ENCODE measurements at regions of chr11 and their contacts with region 1.

Region 1: DNA sequence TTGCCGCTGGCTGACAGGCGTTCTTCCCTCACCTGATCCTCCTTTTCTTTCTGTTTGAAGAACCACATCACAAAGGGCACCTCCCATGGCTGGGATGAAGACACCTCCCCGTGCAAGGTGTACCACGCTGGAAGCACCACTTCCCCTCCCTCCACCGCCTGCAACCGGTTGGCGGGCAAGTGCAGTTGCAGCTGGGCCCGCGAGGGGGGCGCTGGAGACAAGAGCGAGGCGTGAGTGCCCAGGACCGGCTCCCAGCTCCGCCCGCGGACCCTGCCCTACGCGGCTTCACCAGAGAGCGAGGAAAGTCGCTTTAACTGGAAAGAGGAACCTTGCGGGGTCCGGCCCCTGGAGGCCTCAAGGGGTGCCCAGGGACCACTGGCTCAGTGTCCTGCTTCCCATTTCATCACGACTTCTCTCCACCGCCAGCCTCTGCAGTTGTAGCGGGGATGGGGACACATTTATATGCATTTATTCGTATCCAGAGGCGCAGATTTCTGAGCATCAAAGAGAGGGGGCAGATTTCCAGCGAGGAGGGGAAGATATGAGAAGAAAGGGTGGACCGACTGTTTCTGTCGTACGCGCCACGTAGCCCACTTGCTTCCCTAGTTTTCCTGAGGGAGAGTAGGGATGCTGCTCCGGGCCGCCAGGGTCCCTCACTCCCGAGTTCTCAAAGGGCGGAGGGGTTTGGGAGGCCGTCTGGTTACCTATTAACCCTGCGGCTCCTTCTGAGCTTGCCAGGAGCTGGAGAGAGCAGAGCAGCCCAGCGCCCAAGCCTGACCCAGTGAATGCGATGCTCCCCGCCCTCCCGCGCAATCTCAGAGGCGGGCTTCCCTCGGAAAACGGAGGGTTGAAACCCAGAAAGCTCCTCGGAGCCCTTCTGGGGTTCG is 3.5 kb downstream of the ESAM start:
- DNase-seq: peak; percentile 93 to 97
- H3K4me3 ChIP-seq: peak overlapping the region; percentile 33
- H3K4me3 Mint-ChIP-seq: peak overlapping the region; percentile 91
- H3K27ac Mint-ChIP-seq: peak overlapping the region; percentile 46
- H3K4me1 ChIP-seq: peaks cover 19% of the 10 kb centered on the region
- H3K4me1 Mint-ChIP-seq: peaks cover 7% of the 10 kb centered on the region
- H3K27me3 ChIP-seq: no peaks in the 10 kb centered on the region
- H3K27me3 Mint-ChIP-seq: no peaks in the 10 kb centered on the region
- CTCF ChIP-seq: peak; percentile 97 to 99

Region 2: DNA sequence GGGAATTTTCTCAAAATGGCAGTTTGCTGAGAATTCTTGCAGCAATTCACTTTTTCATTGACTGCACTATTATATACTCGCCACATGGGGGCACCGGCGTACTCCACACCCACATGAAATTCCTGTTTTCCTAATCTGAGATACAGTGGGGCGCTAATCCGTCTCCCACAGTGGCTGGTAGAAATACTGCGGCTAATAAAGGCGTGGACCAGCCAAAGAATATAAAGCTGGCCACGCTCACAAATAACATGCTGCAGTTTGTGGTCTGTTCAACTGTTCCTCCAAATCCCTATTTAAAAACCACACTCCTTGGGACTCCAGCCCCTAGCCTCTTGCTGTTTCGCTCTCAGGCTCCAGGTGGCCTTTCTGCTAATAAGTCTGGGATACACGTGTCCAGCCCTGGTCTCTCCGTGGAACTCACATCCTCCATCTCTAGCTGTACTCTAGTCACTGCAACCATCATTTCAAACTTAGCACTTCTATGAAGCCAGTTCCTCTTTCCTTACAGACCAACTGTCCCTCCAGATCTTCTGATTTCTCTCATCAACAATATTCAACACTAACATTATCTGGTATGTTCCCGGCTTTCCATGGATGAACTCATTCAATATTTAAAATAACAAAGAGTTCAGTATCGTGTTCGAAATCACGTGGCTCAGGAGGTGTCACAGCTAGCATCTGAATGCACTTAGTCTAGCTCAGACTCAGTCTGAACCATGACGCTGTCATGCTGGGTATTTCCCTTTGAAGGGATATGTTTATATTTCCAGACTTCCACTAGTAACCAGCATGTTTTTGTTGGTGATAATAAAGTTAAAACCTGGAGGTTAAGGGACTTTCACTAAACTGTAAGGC is 113.9 kb before region 1 on chr11:
- CTCF ChIA-PET with region 1: interaction called, 9 read pairs
- POLR2A ChIA-PET with region 1: no interaction called
- intact Hi-C with region 1: loop called (anchors 1 kb)
- DNase-seq: peak; percentile 77 to 79
- H3K4me3 ChIP-seq: 0 out of 2 replicates have a peak overlapping the region, but pooled peaks have one; percentile 1
- H3K4me3 Mint-ChIP-seq: peak overlapping the region; percentile 54
- H3K27ac Mint-ChIP-seq: no peak overlapping the region
- H3K4me1 ChIP-seq: no peaks in the 10 kb centered on the region
- H3K4me1 Mint-ChIP-seq: no peaks in the 10 kb centered on the region
- H3K27me3 ChIP-seq: no peaks in the 10 kb centered on the region
- H3K27me3 Mint-ChIP-seq: no peaks in the 10 kb centered on the region
- CTCF ChIP-seq: peak; percentile 92 to 99

Region 3: DNA sequence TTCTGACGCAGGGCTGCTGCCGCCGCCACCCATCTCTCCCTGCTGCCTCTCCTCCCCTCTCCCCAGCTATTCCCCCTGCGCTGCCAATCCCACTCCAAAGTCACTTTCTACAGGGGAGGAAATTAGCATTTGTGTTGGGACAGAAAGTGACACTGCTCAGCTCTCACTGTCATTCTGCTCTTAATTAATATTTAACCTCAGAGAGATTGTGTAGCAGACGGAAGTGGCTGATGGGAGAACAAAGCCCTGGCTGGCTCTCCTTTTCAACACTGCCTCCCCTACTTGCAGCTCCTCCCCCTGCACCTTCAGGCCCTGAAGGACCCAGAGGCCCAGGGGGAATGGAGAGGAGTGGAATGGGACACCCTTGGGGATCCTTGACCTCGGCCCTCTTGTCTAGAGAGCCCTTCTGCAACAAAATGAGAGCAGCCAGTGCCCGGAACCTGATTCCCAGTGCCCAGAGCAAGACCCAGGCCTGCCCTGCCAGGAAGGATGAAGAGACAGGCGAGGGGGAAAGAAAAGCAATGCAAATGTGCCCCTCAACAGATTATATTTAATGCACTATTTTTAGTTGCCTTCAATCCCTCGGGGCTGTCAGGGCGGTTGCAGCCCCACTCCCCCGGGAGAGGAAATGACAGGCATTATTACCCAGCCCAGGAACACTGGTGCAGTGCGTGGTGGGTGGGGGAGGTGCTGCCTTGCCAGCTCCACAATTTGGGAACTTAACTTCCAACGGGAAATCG is 33.4 kb before region 1 on chr11:
- CTCF ChIA-PET with region 1: interaction called, 8 read pairs
- POLR2A ChIA-PET with region 1: no interaction called
- intact Hi-C with region 1: loop called (anchors 1 kb)
- DNase-seq: peak; percentile 67 to 76
- H3K4me3 ChIP-seq: no peak overlapping the region
- H3K4me3 Mint-ChIP-seq: peak overlapping the region; percentile 63
- H3K27ac Mint-ChIP-seq: peak overlapping the region; percentile 7
- H3K4me1 ChIP-seq: peaks cover 15% of the 10 kb centered on the region
- H3K4me1 Mint-ChIP-seq: peaks cover 17% of the 10 kb centered on the region
- H3K27me3 ChIP-seq: no peaks in the 10 kb centered on the region
- H3K27me3 Mint-ChIP-seq: peaks cover 6% of the 10 kb centered on the region
- CTCF ChIP-seq: no peak

Region 4: GRCh38 chr11:124746621-124747243 is 11.8 kb before region 1 on chr11:
- CTCF ChIA-PET with region 1: interaction called, 71 read pairs
- POLR2A ChIA-PET with region 1: interaction called, 7 read pairs
- intact Hi-C with region 1: loop called (anchors 1 kb)
- DNase-seq: peak; percentile 94 to 98
- H3K4me3 ChIP-seq: peak overlapping the region; percentile 57
- H3K4me3 Mint-ChIP-seq: peak overlapping the region; percentile 84
- H3K27ac Mint-ChIP-seq: peak overlapping the region; percentile 60
- H3K4me1 ChIP-seq: peaks cover 25% of the 10 kb centered on the region
- H3K4me1 Mint-ChIP-seq: peaks cover 17% of the 10 kb centered on the region
- H3K27me3 ChIP-seq: peaks cover under 1% of the 10 kb centered on the region; the same call in 1 of the 2 replicates
- H3K27me3 Mint-ChIP-seq: peaks cover 7% of the 10 kb centered on the region
- CTCF ChIP-seq: peak; percentile 75 to 94

Region 5: GRCh38 chr11:124793466-124794278 is 35.1 kb after region 1 on chr11:
- CTCF ChIA-PET with region 1: interaction called, 25 read pairs
- POLR2A ChIA-PET with region 1: no interaction called
- intact Hi-C with region 1: loop called (anchors 1 kb)
- DNase-seq: peak in 1 of 2 experiments; percentile 79
- H3K4me3 ChIP-seq: no peak overlapping the region
- H3K4me3 Mint-ChIP-seq: no peak overlapping the region
- H3K27ac Mint-ChIP-seq: no peak overlapping the region
- H3K4me1 ChIP-seq: peaks cover 5% of the 10 kb centered on the region; the same call in 1 of the 2 replicates
- H3K4me1 Mint-ChIP-seq: peaks cover 24% of the 10 kb centered on the region
- H3K27me3 ChIP-seq: no peaks in the 10 kb centered on the region
- H3K27me3 Mint-ChIP-seq: no peaks in the 10 kb centered on the region
- CTCF ChIP-seq: peak; percentile 85 to 94

Region 6: GRCh38 chr11:124837491-124837856 is 78.9 kb after region 1 on chr11:
- CTCF ChIA-PET with region 1: interaction called, 29 read pairs
- POLR2A ChIA-PET with region 1: no interaction called
- intact Hi-C with region 1: loop called (anchors 1 kb)
- DNase-seq: peak; percentile 74 to 76
- H3K4me3 ChIP-seq: no peak overlapping the region
- H3K4me3 Mint-ChIP-seq: peak overlapping the region; percentile 81
- H3K27ac Mint-ChIP-seq: no peak overlapping the region
- H3K4me1 ChIP-seq: peaks cover 13% of the 10 kb centered on the region; the same call in 1 of the 2 replicates
- H3K4me1 Mint-ChIP-seq: peaks cover 6% of the 10 kb centered on the region
- H3K27me3 ChIP-seq: peaks cover 16% of the 10 kb centered on the region
- H3K27me3 Mint-ChIP-seq: peaks cover 33% of the 10 kb centered on the region
- CTCF ChIP-seq: peak in 1 of 2 experiments; percentile 85

Region 7: DNA sequence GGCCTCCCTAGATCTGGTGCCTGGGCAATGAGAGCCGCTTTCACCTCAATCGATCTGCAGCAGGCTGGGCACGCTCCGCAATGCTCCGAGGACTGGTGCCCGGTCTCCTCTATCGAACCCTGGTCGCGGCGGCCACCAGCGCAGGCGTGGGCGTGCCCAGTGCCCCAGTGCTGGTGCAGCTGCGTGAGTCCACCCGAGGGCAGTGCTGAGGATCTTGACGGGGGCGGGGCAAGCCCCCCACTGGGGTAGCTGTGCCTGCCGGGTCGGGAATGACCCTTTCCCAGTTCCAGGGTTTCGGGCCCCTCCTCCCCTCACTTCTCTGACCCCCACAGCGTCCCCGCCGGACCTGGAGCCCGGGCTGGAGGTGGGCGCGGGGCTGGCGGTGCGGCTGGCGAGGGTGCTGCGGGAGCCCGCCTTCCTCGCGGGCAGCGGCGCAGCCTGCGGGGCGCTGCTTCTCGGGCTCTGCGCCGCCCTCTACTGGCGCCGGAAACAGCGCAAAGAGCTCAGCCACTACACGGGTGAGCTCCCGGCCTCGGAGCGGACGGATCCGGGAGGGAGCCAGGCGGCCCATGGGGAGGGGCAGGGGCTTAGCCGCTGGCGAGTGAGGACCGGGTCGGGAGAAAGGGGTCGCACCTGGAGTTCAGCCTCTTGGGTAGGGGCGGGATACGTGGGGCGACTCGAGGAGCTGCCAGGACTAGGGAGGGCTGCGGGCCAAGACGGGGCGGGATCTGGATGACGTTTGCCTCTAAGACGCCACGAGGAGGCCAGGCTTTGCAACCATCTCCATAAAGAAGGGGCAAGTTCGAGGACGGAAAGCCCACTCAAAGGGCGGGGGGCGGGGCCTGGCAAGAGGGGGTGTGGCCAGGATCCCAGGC is 117.6 kb after region 1 on chr11:
- CTCF ChIA-PET with region 1: interaction called, 12 read pairs
- POLR2A ChIA-PET with region 1: no interaction called
- intact Hi-C with region 1: no loop called
- DNase-seq: peak; percentile 86 to 93
- H3K4me3 ChIP-seq: peak overlapping the region; percentile 62
- H3K4me3 Mint-ChIP-seq: peak overlapping the region; percentile 80
- H3K27ac Mint-ChIP-seq: peak overlapping the region; percentile 83
- H3K4me1 ChIP-seq: 0 out of 2 replicates have a peak, but pooled peaks cover 4% of the 10 kb centered on the region
- H3K4me1 Mint-ChIP-seq: peaks cover 12% of the 10 kb centered on the region
- H3K27me3 ChIP-seq: peaks cover 4% of the 10 kb centered on the region
- H3K27me3 Mint-ChIP-seq: peaks cover 16% of the 10 kb centered on the region
- CTCF ChIP-seq: peak; percentile 92 to 97